CD4-positive, alpha-beta T cell (primary cell): ENCODE measurements at regions of chr12 and their contacts with region 1.

Region 1: GRCh38 chr12:91695951-91696350 is 449.7 kb downstream of the BTG1 start:
- DNase-seq: no peak
- ATAC-seq: no peak
- H3K4me3 ChIP-seq: no peak overlapping the region
- H3K4me3 Mint-ChIP-seq: no peak overlapping the region
- H3K27ac ChIP-seq: no peak overlapping the region
- H3K27ac Mint-ChIP-seq: no peak overlapping the region
- H3K4me1 ChIP-seq: no peaks in the 10 kb centered on the region
- H3K4me1 Mint-ChIP-seq: no peaks in the 10 kb centered on the region
- H3K27me3 ChIP-seq: no peaks in the 10 kb centered on the region
- H3K27me3 Mint-ChIP-seq: no peaks in the 10 kb centered on the region
- CTCF ChIP-seq: no peak

Region 2: DNA sequence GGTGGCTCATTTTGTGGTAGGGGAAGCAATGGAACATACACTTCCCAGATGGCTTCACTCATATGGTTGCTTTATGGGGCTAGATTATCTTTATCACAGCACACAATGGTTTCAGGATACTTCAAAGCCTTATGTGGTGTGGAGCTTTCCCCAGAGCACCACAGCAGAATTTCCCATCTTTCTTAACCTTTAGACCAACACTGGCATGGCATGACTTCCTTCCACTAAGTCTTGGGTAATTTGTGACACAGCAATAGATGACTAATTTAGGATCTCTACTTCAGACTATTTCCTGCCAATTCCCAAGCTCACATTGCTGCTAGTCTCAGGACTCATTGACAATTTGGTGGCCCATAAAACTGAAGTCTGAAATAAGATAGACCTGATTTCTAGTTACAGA is 476.4 kb before region 1 on chr12:
- CTCF ChIA-PET with region 1: no interaction called
- POLR2A ChIA-PET with region 1: no interaction called
- intact Hi-C with region 1: no loop called
- DNase-seq: no peak
- ATAC-seq: no peak
- H3K4me3 ChIP-seq: no peak overlapping the region
- H3K4me3 Mint-ChIP-seq: no peak overlapping the region
- H3K27ac ChIP-seq: no peak overlapping the region
- H3K27ac Mint-ChIP-seq: no peak overlapping the region
- H3K4me1 ChIP-seq: no peaks in the 10 kb centered on the region
- H3K4me1 Mint-ChIP-seq: no peaks in the 10 kb centered on the region
- H3K27me3 ChIP-seq: no peaks in the 10 kb centered on the region
- H3K27me3 Mint-ChIP-seq: peaks cover 8% of the 10 kb centered on the region
- CTCF ChIP-seq: no peak

Region 3: GRCh38 chr12:91577586-91578539 is 118.1 kb before region 1 on chr12:
- CTCF ChIA-PET with region 1: no interaction called
- POLR2A ChIA-PET with region 1: no interaction called
- intact Hi-C with region 1: loop called in 1 of 2 experiments (anchors 10 kb)
- DNase-seq: peak in 3 of 14 experiments; percentile 47 to 57 (median 50)
- ATAC-seq: peak; percentile 82
- H3K4me3 ChIP-seq: peak overlapping the region; percentile 47
- H3K4me3 Mint-ChIP-seq: peak overlapping the region; percentile 76
- H3K27ac ChIP-seq: no peak overlapping the region
- H3K27ac Mint-ChIP-seq: peak overlapping the region; percentile 28
- H3K4me1 ChIP-seq: no peaks in the 10 kb centered on the region
- H3K4me1 Mint-ChIP-seq: peaks cover 15% of the 10 kb centered on the region
- H3K27me3 ChIP-seq: no peaks in the 10 kb centered on the region
- H3K27me3 Mint-ChIP-seq: no peaks in the 10 kb centered on the region
- CTCF ChIP-seq: peak; percentile 85